CD8-positive, alpha-beta T cell (primary cell): ENCODE measurements at regions of chr6 and their contacts with region 1.

Region 1: DNA sequence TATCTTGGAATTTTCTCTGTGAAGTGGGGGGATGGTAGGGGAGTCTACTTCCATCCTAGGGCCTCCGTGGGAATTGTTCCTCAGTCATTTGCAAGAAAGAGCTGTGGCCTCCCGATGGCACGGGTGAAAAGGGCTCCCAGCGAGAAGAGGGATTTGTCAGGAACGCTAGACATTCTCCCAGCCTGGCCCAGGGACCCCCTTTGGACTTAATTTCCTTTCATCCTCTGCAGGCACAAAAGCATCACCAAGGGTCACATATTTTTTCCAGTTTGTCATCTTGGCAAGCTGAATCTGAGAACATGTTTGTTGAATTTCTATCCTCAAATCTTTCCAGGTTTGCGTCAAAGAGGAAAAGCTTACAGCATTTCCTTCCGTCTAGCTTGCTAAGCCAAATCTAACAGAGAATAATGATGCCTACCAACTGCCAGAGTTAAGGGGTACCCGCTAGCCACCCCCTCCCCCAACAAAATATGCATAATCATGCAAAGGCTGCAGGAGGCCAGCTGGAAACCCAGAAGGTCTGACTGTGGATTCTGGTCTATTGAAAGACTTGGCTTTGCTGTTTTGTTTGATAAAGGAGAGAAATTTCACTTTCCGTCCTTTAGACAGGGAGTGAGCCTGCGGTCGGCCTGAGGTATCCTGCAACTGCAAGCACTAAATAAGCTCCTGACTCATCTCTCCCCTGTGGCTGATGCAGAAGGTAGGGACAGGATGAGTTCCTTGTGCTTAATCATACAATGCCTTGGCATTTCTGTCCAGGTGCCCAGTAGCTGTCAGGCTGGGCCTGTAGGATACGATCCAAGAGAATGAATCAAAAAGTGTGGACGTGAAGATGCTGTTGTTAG is 23.1 kb downstream of the PSMG4 start:
- DNase-seq: no peak
- ATAC-seq: no peak
- H3K4me3 ChIP-seq: no peak overlapping the region
- H3K4me3 Mint-ChIP-seq: no peak overlapping the region
- H3K27ac ChIP-seq: no peak overlapping the region
- H3K27ac Mint-ChIP-seq: no peak overlapping the region
- H3K4me1 ChIP-seq: no peaks in the 10 kb centered on the region
- H3K4me1 Mint-ChIP-seq: peaks cover 3% of the 10 kb centered on the region
- H3K27me3 ChIP-seq: no peaks in the 10 kb centered on the region
- H3K27me3 Mint-ChIP-seq: no peaks in the 10 kb centered on the region
- CTCF ChIP-seq: no peak

Region 2: DNA sequence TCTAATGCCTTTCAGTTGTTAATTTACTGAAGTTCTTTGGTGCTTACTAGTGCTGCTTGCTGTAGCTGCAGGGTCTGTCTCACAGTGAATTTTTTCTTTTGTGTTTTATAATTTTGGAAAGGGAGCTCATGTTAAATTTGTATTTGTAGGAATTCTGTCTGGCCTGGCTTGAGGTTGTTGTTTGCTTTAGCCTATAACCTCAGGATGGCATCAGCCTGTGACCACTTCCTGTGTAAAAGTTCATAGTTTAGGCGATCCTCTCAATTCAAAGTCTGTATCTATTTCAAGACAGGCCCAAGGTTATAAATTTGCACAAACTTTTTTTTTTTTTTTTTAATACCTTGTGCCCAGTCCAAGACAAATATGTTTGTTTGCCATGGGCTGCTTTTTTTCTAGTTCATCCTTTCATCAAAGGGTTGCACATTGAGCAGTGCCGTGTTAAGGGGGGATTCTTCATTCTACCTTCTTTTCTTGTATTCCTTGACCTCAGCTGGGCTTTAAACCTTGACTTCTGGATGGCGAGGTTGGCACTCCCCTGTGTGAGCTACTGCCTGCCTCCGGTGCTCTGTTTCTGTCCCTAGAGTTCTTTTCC is 206.2 kb before region 1 on chr6:
- CTCF ChIA-PET with region 1: no interaction called
- POLR2A ChIA-PET with region 1: no interaction called
- intact Hi-C with region 1: no loop called
- DNase-seq: peak in 2 of 9 experiments; percentile 20 to 40
- ATAC-seq: peak; percentile 20
- H3K4me3 ChIP-seq: no peak overlapping the region
- H3K4me3 Mint-ChIP-seq: peak overlapping the region; percentile 61
- H3K27ac ChIP-seq: peak overlapping the region in 1 of 2 experiments; percentile 63
- H3K27ac Mint-ChIP-seq: peak overlapping the region; percentile 83
- H3K4me1 ChIP-seq: peaks cover 30% of the 10 kb centered on the region
- H3K4me1 Mint-ChIP-seq: peaks cover 58% of the 10 kb centered on the region
- H3K27me3 ChIP-seq: no peaks in the 10 kb centered on the region
- H3K27me3 Mint-ChIP-seq: no peaks in the 10 kb centered on the region
- CTCF ChIP-seq: no peak

Region 3: DNA sequence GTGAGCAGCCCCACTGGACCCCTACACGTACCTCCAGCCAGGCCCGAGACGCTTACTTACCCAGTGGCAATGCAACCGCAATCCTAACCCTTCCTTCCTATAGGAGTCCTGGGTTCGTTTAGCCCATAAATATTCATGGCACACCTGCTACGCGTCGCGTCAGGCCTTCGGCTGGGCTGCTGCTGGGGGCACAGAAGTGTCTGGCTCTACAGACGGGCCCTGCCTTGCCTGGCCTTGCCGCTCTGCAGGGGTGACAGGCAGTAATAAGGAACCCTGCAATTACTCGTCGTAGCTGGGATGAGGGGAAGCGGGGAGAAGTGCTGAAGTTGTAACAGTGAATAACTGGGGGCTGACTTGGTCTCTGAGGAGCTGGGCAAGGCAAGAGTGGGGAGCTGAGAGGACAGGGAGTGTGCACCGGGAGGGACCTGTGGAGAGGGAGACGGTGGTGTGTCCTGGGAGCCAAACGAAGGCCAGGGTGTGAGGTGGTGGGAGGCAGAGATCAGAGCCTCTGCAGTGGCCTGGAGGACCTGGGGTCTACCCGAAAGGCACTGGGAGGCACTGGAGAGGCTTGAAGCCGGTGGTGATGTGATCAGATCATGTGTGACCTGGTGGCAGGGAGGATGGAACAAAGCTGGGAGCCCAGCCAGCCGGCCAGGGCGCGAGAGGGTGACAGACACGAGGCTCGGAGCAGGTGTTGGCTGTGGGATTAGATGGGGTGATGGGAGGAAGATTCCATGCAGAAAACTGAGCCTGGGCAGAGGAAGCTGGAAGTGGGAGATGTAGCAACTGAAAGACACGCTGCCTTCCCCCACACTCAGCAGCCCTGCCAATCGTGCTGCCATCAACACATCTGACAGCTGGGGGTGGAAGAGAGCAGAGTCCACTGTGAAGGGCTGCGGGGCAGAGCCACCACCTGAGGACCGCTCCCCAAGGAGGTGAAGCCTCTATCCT is 13.3 kb after region 1 on chr6:
- CTCF ChIA-PET with region 1: interaction called, 26 read pairs
- POLR2A ChIA-PET with region 1: no interaction called
- intact Hi-C with region 1: no loop called
- DNase-seq: no peak
- ATAC-seq: no peak
- H3K4me3 ChIP-seq: no peak overlapping the region
- H3K4me3 Mint-ChIP-seq: no peak overlapping the region
- H3K27ac ChIP-seq: no peak overlapping the region
- H3K27ac Mint-ChIP-seq: no peak overlapping the region
- H3K4me1 ChIP-seq: no peaks in the 10 kb centered on the region
- H3K4me1 Mint-ChIP-seq: no peaks in the 10 kb centered on the region
- H3K27me3 ChIP-seq: no peaks in the 10 kb centered on the region
- H3K27me3 Mint-ChIP-seq: no peaks in the 10 kb centered on the region
- CTCF ChIP-seq: no peak

Region 4: DNA sequence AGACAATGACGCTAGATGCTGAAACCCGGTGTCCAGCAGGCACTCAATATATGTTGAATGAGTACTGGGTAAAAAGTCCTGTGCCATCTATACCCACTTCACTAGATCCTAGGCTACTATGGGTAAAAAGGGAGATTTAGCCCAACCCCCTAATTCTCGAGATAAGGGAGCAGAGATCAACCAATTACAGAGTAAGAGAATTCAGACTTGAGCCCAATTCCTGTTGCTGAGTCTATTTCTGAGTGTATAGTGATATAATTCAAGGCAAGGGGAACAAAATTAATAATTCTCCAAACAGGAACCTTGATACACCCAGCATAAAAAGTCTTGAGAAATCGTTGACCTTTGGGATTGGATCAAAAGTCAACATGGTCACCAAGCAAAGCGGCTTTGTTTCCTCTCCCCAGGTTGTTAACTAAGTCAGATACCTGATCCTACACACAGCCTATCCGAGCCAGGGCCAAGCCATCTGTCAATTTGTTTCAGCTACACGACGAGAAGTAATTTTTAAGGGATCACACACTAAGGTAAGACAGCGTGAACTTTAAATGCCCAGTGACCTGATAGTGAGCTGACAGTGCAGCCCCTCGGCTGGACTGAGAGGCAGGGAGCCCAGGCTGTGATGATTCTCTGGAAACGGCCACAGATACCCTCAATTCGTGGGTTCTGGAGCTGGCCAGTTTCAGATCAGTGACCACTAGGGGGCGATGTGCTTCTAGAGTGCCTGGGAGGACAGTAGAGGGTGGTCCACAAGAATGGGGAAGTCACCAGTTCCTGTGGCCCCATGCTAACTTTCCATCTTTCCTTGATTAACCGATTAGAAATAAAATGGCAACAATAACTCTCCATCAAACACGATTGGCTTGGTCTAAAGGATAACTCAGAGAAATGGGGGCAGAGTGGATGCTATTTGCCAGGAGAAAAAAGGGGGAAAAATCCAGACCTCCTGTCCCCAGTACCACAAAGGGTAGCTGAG is 128.8 kb after region 1 on chr6:
- CTCF ChIA-PET with region 1: no interaction called
- POLR2A ChIA-PET with region 1: no interaction called
- intact Hi-C with region 1: loop called in 1 of 2 experiments (anchors 2 kb)
- DNase-seq: peak; percentile 30 to 77 (median 68)
- ATAC-seq: peak; percentile 70
- H3K4me3 ChIP-seq: no peak overlapping the region
- H3K4me3 Mint-ChIP-seq: no peak overlapping the region
- H3K27ac ChIP-seq: no peak overlapping the region
- H3K27ac Mint-ChIP-seq: no peak overlapping the region
- H3K4me1 ChIP-seq: peaks cover 6% of the 10 kb centered on the region
- H3K4me1 Mint-ChIP-seq: peaks cover 10% of the 10 kb centered on the region
- H3K27me3 ChIP-seq: no peaks in the 10 kb centered on the region
- H3K27me3 Mint-ChIP-seq: no peaks in the 10 kb centered on the region
- CTCF ChIP-seq: peak; percentile 60

Region 5: DNA sequence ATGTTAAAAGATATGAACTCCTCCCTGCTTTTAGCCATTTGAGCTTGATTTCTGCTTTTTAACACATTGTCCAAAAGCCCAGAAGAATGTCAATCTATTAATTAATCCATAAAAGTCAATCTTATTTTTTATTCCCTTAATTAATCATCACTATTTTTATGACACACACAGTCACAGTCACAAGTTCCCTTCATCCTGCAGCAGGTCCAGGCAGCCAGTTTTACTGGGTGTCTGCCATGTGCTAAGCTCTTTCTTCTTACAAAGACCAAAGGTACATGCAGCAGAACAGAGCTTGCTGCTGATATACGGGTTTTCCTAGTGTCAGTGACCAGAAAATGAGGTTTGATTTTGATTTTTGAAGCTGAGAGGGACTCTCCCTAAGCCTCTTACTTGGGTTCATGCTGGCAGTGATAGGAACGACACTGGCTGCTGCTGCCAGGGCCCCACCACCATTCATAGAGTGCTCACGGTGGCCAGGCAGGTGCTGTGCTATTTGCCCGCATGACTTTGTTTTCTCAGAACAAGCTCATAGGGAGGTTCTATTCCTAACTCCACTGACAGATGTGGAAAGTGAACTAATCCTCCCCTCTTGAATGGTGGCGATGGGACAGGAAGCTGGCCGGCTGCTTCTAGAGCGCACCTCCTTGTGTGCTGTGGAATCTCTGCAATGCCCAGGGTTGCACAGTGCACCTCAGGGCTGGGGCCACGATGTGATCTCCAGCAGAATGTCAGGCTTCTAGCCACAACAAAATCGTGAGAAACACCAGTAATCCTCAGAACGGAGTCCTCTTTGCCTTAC is 228.5 kb after region 1 on chr6:
- CTCF ChIA-PET with region 1: no interaction called
- POLR2A ChIA-PET with region 1: no interaction called
- intact Hi-C with region 1: loop called (anchors 1 to 5 kb)
- DNase-seq: no peak
- ATAC-seq: no peak
- H3K4me3 ChIP-seq: no peak overlapping the region
- H3K4me3 Mint-ChIP-seq: no peak overlapping the region
- H3K27ac ChIP-seq: no peak overlapping the region
- H3K27ac Mint-ChIP-seq: no peak overlapping the region
- H3K4me1 ChIP-seq: no peaks in the 10 kb centered on the region
- H3K4me1 Mint-ChIP-seq: no peaks in the 10 kb centered on the region
- H3K27me3 ChIP-seq: peaks cover 0 to 4% of the 10 kb centered on the region in 2 experiments
- H3K27me3 Mint-ChIP-seq: peaks cover 14% of the 10 kb centered on the region
- CTCF ChIP-seq: no peak

Region 6: GRCh38 chr6:3848925-3849605 is 567.2 kb after region 1 on chr6 and contains the start of gene FAM50B:
- CTCF ChIA-PET with region 1: no interaction called
- POLR2A ChIA-PET with region 1: no interaction called
- intact Hi-C with region 1: loop called in 1 of 2 experiments (anchors 10 kb)
- DNase-seq: peak; percentile 81 to 94 (median 90)
- ATAC-seq: peak; percentile 95
- H3K4me3 ChIP-seq: peak within 1 kb of the TSS; percentile 54 to 63
- H3K4me3 Mint-ChIP-seq: peak within 1 kb of the TSS; percentile 80
- H3K27ac ChIP-seq: peak within 1 kb of the TSS; percentile 47 to 56
- H3K27ac Mint-ChIP-seq: peak within 1 kb of the TSS; percentile 84
- H3K4me1 ChIP-seq: peaks cover 6% of the 10 kb centered on the region
- H3K4me1 Mint-ChIP-seq: peaks cover 18% of the 10 kb centered on the region
- H3K27me3 ChIP-seq: no peaks in the 10 kb centered on the region
- H3K27me3 Mint-ChIP-seq: no peaks in the 10 kb centered on the region
- CTCF ChIP-seq: peak; percentile 75
- total RNA-seq, gene FAM50B: 0.97 to 1.1 TPM

Region 7: DNA sequence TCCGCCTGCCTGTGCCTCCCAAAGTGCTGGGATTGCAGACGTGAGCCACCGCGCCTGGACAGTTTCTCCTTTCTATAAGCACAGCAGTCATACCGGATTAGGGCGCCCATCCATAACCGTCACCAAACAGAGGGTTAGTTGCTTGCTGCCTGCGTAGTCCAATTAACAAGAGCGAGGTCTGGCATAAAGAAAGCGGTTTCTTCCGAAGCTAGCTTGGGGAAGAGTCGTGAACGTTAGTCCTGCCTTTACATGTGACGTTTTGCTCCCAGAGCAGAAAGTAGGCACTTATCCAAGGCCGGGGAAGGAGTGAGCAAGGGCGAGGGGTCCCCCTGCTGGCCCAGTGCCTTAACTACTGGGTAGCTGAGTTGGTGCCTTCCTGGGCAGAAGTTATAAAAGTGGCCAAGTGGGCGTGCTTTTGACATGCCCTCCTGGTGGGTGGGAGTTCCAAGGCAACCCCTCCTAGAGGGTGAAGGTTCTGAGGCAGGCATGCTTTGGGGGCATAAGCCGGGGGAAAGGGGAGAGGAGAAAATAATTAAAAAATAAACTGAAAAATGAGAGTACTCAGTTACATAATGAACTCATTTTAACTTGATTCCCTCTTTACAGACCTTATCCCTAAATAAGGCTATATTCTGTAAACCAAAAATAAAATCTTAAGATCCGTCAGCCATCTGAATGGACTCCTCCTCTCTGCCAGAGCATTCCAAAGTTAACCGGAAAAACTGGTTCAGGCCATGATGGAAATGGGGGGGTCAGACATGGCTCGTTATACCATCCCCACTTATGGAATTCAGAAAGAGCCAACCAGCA is 709.0 kb after region 1 on chr6:
- CTCF ChIA-PET with region 1: no interaction called
- POLR2A ChIA-PET with region 1: no interaction called
- intact Hi-C with region 1: loop called in 1 of 2 experiments (anchors 5 kb)
- DNase-seq: peak; percentile 42 to 75 (median 71)
- ATAC-seq: peak; percentile 98
- H3K4me3 ChIP-seq: no peak overlapping the region
- H3K4me3 Mint-ChIP-seq: no peak overlapping the region
- H3K27ac ChIP-seq: no peak overlapping the region
- H3K27ac Mint-ChIP-seq: no peak overlapping the region
- H3K4me1 ChIP-seq: no peaks in the 10 kb centered on the region
- H3K4me1 Mint-ChIP-seq: peaks cover 18% of the 10 kb centered on the region
- H3K27me3 ChIP-seq: no peaks in the 10 kb centered on the region
- H3K27me3 Mint-ChIP-seq: no peaks in the 10 kb centered on the region
- CTCF ChIP-seq: peak; percentile 73